CD4-positive, alpha-beta memory T cell (primary cell): ENCODE measurements at regions of chr10 and their contacts with region 1.

Region 1: GRCh38 chr10:43689955-43690771 is 41.5 kb upstream of the ZNF32 start:
- DNase-seq: peak; percentile 73 to 86 (median 82)
- H3K4me3 ChIP-seq: peak overlapping the region; percentile 60 to 69
- H3K4me3 Mint-ChIP-seq: peak overlapping the region; percentile 86 to 93 (median 90)
- H3K27ac ChIP-seq: peak overlapping the region; percentile 3
- H3K27ac Mint-ChIP-seq: peak overlapping the region in 5 of 7 donors; percentile 24 to 82 (median 62)
- H3K4me1 ChIP-seq: peaks cover 6% of the 10 kb centered on the region
- H3K4me1 Mint-ChIP-seq: peaks cover 2 to 19% (median 8%) of the 10 kb centered on the region in 4 donors
- H3K27me3 ChIP-seq: no peaks in the 10 kb centered on the region
- H3K27me3 Mint-ChIP-seq: peaks cover 14 to 18% of the 10 kb centered on the region in 2 donors

Region 2: GRCh38 chr10:43671656-43672531 is 18.3 kb before region 1 on chr10:
- CTCF ChIA-PET with region 1: interaction called, 16 read pairs
- POLR2A ChIA-PET with region 1: no interaction called
- intact Hi-C with region 1: loop called (anchors 1 kb)
- DNase-seq: peak in 4 of 5 donors; percentile 49 to 65 (median 54)
- H3K4me3 ChIP-seq: no peak overlapping the region
- H3K4me3 Mint-ChIP-seq: no peak overlapping the region
- H3K27ac ChIP-seq: no peak overlapping the region
- H3K27ac Mint-ChIP-seq: no peak overlapping the region
- H3K4me1 ChIP-seq: no peaks in the 10 kb centered on the region
- H3K4me1 Mint-ChIP-seq: peaks cover 0 to 7% (median 2%) of the 10 kb centered on the region in 4 donors
- H3K27me3 ChIP-seq: peaks cover 10% of the 10 kb centered on the region
- H3K27me3 Mint-ChIP-seq: peaks cover 27 to 32% of the 10 kb centered on the region in 2 donors

Region 3: DNA sequence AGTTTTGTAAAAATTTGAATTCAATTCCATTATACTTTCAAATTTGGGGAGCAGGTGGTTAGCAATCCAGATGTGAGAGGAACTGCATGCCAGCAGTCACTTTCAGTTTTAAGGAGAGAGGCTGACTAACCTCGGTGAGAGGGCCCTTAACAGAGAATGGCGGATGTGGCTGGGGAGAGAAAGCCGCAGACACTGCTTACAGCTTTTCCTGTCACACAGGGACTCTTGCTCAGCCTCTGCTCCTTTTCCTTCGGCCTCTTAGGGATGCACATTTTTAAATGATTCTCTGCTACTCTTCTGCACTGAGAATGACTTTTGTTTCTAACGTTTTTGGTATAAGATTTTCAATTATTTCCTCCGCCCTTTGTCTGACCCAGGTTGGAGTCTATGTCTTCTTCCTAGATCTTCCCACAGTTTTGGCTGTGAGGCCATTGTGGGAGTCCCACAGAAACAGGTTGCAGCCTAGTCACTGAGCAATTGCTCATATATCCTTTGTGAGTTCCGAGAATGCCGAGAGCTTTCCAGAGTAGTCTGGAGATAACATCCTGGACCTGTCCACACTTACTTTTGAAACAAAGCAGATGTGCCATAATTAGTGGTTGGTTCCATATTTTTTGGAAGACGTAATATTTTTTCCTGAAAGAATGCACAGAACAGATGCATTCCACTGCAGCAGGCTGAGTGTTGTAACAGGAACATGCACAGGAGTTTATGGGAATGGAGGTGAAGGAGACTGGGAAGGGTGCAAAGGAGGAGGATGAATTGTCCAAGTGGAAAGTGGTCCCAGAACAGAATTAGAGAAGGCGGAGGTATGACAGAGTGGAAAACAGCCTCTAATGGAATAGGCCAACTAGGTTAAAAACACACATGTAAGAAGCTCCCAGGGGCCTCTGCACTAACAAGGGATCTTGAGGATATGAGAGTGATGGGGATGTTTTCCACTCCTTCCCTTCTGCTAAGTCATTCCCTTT is 126.5 kb after region 1 on chr10:
- CTCF ChIA-PET with region 1: interaction called, 7 read pairs
- POLR2A ChIA-PET with region 1: no interaction called
- intact Hi-C with region 1: loop called (anchors 10 kb)
- DNase-seq: peak; percentile 65 to 83 (median 70)
- H3K4me3 ChIP-seq: peak overlapping the region in 1 of 2 donors; percentile 17
- H3K4me3 Mint-ChIP-seq: peak overlapping the region; percentile 21 to 82 (median 76)
- H3K27ac ChIP-seq: peak overlapping the region; percentile 15
- H3K27ac Mint-ChIP-seq: peak overlapping the region; percentile 68 to 90 (median 76)
- H3K4me1 ChIP-seq: peaks cover 27% of the 10 kb centered on the region
- H3K4me1 Mint-ChIP-seq: peaks cover 26 to 45% (median 34%) of the 10 kb centered on the region in 4 donors
- H3K27me3 ChIP-seq: no peaks in the 10 kb centered on the region
- H3K27me3 Mint-ChIP-seq: no peaks in the 10 kb centered on the region

Region 4: GRCh38 chr10:44173622-44173923 is 483.4 kb after region 1 on chr10:
- CTCF ChIA-PET with region 1: no interaction called
- POLR2A ChIA-PET with region 1: no interaction called
- intact Hi-C with region 1: no loop called
- DNase-seq: no peak
- H3K4me3 ChIP-seq: no peak overlapping the region
- H3K4me3 Mint-ChIP-seq: no peak overlapping the region
- H3K27ac ChIP-seq: no peak overlapping the region
- H3K27ac Mint-ChIP-seq: no peak overlapping the region
- H3K4me1 ChIP-seq: no peaks in the 10 kb centered on the region
- H3K4me1 Mint-ChIP-seq: no peaks in the 10 kb centered on the region
- H3K27me3 ChIP-seq: no peaks in the 10 kb centered on the region
- H3K27me3 Mint-ChIP-seq: peaks cover 3% of the 10 kb centered on the region in 2 donors

Region 5: GRCh38 chr10:44310762-44311562 is 620.8 kb after region 1 on chr10:
- CTCF ChIA-PET with region 1: interaction called, 8 read pairs
- POLR2A ChIA-PET with region 1: interaction called, 5 read pairs
- intact Hi-C with region 1: loop called (anchors 1 kb)
- DNase-seq: peak; percentile 41 to 69 (median 51)
- H3K4me3 ChIP-seq: peak overlapping the region in 1 of 2 donors; percentile 15
- H3K4me3 Mint-ChIP-seq: peak overlapping the region in 5 of 8 donors; percentile 26 to 64 (median 53)
- H3K27ac ChIP-seq: no peak overlapping the region
- H3K27ac Mint-ChIP-seq: peak overlapping the region in 4 of 7 donors; percentile 5 to 87 (median 70)
- H3K4me1 ChIP-seq: no peaks in the 10 kb centered on the region
- H3K4me1 Mint-ChIP-seq: peaks cover 7 to 13% (median 8%) of the 10 kb centered on the region in 4 donors
- H3K27me3 ChIP-seq: no peaks in the 10 kb centered on the region
- H3K27me3 Mint-ChIP-seq: peaks cover 9 to 14% of the 10 kb centered on the region in 2 donors

Region 6: GRCh38 chr10:44857363-44858016 is 1167.3 kb after region 1 on chr10:
- CTCF ChIA-PET with region 1: interaction called, 9 read pairs
- POLR2A ChIA-PET with region 1: no interaction called
- intact Hi-C with region 1: loop called (anchors 1 kb)
- DNase-seq: peak in 4 of 5 donors; percentile 20 to 48 (median 34)
- H3K4me3 ChIP-seq: no peak overlapping the region
- H3K4me3 Mint-ChIP-seq: no peak overlapping the region
- H3K27ac ChIP-seq: no peak overlapping the region
- H3K27ac Mint-ChIP-seq: no peak overlapping the region
- H3K4me1 ChIP-seq: no peaks in the 10 kb centered on the region
- H3K4me1 Mint-ChIP-seq: no peaks in the 10 kb centered on the region
- H3K27me3 ChIP-seq: no peaks in the 10 kb centered on the region
- H3K27me3 Mint-ChIP-seq: peaks cover 0 to 3% of the 10 kb centered on the region in 2 donors